Endothelial cell of umbilical vein (primary cell): ENCODE measurements at regions of chr4 and their contacts with region 1.

Region 1: GRCh38 chr4:128574706-128575105 is 234.8 kb upstream of the JADE1 start:
- DNase-seq: peak; percentile 49
- H3K4me3 ChIP-seq: no peak overlapping the region
- H3K27ac ChIP-seq: no peak overlapping the region
- H3K4me1 ChIP-seq: peaks cover 38% of the 10 kb centered on the region
- H3K27me3 ChIP-seq: no peaks in the 10 kb centered on the region
- CTCF ChIP-seq: peak; percentile 44 to 59
- POLR2A ChIP-seq: no peak

Region 2: DNA sequence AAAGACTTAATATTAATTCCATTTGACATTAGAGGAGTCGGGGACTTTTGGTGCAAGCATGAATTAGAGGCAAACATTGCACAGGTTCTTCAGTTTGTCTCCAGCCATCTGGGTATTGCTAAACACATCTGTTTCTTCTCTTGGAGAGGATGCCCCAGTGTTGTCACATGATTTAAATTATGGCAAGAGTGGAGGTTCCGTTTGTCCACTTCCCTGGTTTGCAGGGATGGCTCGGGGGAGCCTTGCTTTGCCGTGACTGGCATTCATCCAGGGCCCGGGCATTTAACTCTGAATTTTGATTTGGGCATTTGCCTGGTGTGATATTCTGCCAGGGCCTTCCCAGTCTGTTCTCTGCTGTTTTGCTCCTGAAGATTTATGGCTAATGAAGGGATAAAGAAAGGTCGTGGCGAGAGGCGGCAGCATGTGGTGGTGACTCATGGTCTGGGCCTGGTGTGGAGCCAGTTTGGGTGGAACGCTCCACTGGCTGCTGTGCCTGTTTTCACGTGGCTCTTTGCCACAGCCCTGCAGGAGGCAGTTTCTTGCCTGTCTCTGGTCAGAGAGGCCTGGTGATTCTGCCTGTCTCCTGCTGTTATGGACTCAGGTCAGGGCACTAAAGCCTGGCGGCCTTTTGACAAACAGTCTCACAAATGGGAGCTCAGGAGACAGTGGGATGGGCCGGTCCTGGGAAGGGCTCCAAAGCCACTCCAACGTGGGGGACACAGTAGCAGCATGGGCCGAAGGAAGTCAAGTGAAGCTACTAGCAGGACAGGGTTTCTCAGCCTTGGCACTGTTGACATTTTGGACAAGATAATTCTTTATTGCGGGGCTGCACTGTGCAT is 187.7 kb before region 1 on chr4:
- CTCF ChIA-PET with region 1: no interaction called
- POLR2A ChIA-PET with region 1: no interaction called
- dilution Hi-C with region 1: no loop called
- intact Hi-C with region 1: loop called (anchors 5 kb)
- DNase-seq: peak; percentile 94
- H3K4me3 ChIP-seq: no peak overlapping the region
- H3K27ac ChIP-seq: peak overlapping the region; percentile 34
- H3K4me1 ChIP-seq: peaks cover 15% of the 10 kb centered on the region
- H3K27me3 ChIP-seq: no peaks in the 10 kb centered on the region
- CTCF ChIP-seq: no peak
- POLR2A ChIP-seq: no peak

Region 3: DNA sequence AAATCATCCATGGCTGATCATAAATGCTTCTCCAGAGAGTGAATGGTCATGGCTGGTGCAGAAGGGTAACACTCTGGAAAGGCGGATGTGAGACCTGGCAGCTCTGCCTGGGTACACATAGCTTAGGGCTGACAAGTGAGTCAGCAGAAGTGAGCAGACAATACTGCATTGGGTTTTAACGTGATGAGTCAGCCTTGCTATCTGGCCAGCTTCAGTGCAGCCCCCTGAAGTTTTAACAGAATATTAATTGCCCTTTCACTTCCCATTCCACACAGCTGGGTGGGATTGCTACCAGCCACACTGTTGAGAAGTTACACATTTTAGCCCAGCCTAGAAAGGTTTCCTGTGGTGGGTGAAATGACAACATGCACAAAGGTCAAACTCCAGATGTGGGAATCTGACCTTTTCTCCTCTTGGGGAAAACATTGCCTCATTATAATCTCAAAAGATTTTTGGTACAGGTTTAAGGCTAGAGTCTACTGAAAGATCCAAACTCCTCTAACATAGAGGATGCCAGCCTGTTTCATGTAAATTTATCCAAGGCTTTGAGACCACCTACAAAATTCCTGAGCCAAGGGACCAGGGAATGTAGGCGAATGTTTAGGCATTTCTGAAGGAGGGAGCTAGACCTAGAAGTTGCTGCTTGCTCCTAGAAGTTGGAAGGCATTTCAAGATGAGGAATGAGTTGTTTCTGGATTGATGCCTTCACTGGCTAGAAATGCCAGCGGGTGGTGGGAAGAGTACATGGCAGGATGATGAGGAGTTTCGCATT is 56.8 kb before region 1 on chr4:
- CTCF ChIA-PET with region 1: interaction called, 12 read pairs
- POLR2A ChIA-PET with region 1: no interaction called
- dilution Hi-C with region 1: no loop called
- intact Hi-C with region 1: loop called (anchors 1 kb)
- DNase-seq: peak; percentile 97
- H3K4me3 ChIP-seq: no peak overlapping the region
- H3K27ac ChIP-seq: peak overlapping the region; percentile 92
- H3K4me1 ChIP-seq: peaks cover 58% of the 10 kb centered on the region
- H3K27me3 ChIP-seq: no peaks in the 10 kb centered on the region
- CTCF ChIP-seq: no peak
- POLR2A ChIP-seq: no peak

Region 4: GRCh38 chr4:128553686-128554515 is 20.8 kb before region 1 on chr4:
- CTCF ChIA-PET with region 1: interaction called, 7 read pairs
- POLR2A ChIA-PET with region 1: interaction called, 3 read pairs
- dilution Hi-C with region 1: no loop called
- intact Hi-C with region 1: loop called (anchors 1 kb)
- DNase-seq: peak; percentile 68
- H3K4me3 ChIP-seq: peak overlapping the region in 2 of 3 experiments; percentile 21 to 60
- H3K27ac ChIP-seq: peak overlapping the region; percentile 86
- H3K4me1 ChIP-seq: peaks cover 22% of the 10 kb centered on the region
- H3K27me3 ChIP-seq: no peaks in the 10 kb centered on the region
- CTCF ChIP-seq: no peak
- POLR2A ChIP-seq: no peak

Region 5: GRCh38 chr4:128600996-128601871 is 26.5 kb after region 1 on chr4:
- CTCF ChIA-PET with region 1: interaction called, 9 read pairs
- POLR2A ChIA-PET with region 1: no interaction called
- dilution Hi-C with region 1: no loop called
- intact Hi-C with region 1: loop called (anchors 1 kb)
- DNase-seq: peak; percentile 97
- H3K4me3 ChIP-seq: no peak overlapping the region
- H3K27ac ChIP-seq: peak overlapping the region; percentile 60
- H3K4me1 ChIP-seq: peaks cover 27% of the 10 kb centered on the region
- H3K27me3 ChIP-seq: no peaks in the 10 kb centered on the region
- CTCF ChIP-seq: no peak
- POLR2A ChIP-seq: no peak

Region 6: DNA sequence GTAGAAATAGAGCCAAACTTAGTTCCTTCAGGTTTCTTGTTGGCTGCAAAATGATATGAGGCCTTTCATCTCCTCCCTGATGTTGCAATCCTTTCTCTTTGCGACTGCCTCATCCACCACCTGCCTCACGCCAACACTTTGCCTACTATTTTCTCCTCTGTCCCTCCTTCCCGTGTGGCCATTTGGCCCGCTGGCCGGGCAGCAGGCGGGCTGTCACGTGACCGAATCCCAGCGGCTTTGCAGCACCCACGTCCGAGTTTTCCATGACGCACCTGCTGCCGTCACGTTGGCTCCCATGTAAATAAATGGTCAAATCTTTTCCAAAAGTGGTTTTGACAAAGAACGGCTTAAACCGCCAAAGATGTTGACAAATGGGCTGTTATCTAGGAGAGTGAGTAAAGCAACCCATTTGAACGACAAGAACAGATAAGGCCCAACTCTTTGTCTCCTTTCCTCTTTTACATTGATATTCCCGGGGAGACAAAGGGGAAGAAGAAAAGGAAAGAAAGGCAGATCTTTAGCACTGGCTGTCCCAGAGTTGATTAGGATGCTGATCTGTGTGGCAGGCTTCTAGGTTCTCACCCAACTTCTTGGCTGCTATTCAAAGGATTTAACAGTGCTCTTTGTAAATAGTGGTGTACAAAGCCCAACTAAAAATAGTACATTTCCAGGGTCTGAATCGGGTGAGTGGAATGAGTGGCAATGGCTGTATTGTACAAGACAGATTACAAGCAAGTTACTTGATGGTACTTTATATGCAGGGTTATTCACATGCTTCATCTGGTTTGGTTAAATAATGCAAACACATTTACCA is 60.6 kb after region 1 on chr4:
- CTCF ChIA-PET with region 1: no interaction called
- POLR2A ChIA-PET with region 1: no interaction called
- dilution Hi-C with region 1: no loop called
- intact Hi-C with region 1: no loop called
- DNase-seq: no peak
- H3K4me3 ChIP-seq: no peak overlapping the region
- H3K27ac ChIP-seq: no peak overlapping the region
- H3K4me1 ChIP-seq: no peaks in the 10 kb centered on the region
- H3K27me3 ChIP-seq: no peaks in the 10 kb centered on the region
- CTCF ChIP-seq: no peak
- POLR2A ChIP-seq: no peak

Region 7: GRCh38 chr4:128653517-128654444 is 79.1 kb after region 1 on chr4:
- CTCF ChIA-PET with region 1: no interaction called
- POLR2A ChIA-PET with region 1: no interaction called
- dilution Hi-C with region 1: no loop called
- intact Hi-C with region 1: no loop called
- DNase-seq: no peak
- H3K4me3 ChIP-seq: no peak overlapping the region
- H3K27ac ChIP-seq: no peak overlapping the region
- H3K4me1 ChIP-seq: no peaks in the 10 kb centered on the region
- H3K27me3 ChIP-seq: peaks cover 0 to 2% of the 10 kb centered on the region in 2 experiments
- CTCF ChIP-seq: no peak
- POLR2A ChIP-seq: no peak

Region 8: DNA sequence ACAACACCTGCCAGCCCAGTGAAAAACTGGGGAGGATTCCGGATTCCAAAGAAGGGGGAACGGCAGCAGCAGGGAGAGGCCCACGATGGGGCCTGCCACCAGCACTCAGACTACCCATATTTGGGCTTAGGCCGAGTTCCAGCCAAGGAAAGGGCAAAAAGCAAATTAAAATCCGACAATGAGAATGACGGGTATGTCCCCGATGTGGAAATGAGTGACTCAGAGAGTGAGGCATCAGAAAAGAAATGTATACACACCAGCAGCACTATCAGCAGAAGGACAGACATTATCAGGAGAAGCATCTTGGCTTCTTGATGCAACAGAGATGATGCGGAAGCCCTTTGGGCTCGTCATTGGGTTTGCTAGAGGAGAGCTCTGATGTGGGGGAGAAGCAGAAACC is 297.2 kb after region 1 on chr4:
- CTCF ChIA-PET with region 1: no interaction called
- POLR2A ChIA-PET with region 1: no interaction called
- dilution Hi-C with region 1: no loop called
- intact Hi-C with region 1: no loop called
- DNase-seq: no peak
- H3K4me3 ChIP-seq: no peak overlapping the region
- H3K27ac ChIP-seq: no peak overlapping the region
- H3K4me1 ChIP-seq: no peaks in the 10 kb centered on the region
- H3K27me3 ChIP-seq: no peaks in the 10 kb centered on the region
- CTCF ChIP-seq: no peak
- POLR2A ChIP-seq: no peak